PC-3 (cell line): ENCODE measurements at regions of chr20 and their contacts with region 1.

Region 1: DNA sequence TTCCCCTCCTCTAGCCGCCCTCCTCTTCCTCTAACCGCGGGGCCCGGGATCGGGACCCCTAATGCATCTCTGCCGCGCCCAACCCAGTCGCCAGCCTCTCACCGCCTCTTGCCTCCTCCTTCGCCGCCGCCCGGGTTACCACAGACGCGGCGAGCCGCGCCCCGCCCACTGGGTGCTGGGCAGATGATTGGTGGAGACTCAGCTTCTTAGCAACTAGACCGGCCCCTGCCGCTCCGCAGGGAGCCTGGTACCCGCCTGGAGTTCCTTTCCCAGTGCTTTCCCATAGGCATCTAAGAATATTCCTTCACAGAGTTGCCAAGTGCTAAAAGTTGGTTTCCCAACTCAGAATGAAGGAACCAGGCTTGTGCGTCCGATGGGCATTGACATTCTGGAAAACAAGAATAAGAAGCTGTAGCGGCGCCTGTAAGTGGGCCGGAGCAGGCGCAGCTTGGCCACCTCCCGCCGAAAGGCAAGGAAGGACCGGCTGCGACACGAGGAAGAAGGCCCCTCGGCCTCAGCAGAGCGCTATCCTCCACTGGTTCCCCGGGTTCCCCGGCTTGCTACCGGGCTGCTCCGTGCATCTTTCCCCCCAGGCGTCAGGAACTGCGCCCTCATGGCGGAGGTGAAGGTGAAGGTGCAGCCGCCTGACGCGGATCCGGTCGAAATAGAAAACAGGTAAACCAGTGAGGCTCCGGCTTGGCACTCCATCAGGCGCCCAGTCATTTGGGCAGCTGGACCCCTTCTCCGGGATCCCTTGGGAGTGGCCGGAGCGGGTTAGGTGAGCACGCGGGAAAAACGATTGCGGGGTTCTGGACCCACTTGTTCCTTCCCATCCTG is at the starts of genes DZANK1 and POLR3F:
- DNase-seq: peak; percentile 98
- ATAC-seq: peak; percentile 99
- H3K4me3 ChIP-seq: peak within 1 kb of the TSS; percentile 90
- H3K27ac ChIP-seq: peak within 1 kb of the TSS; percentile 86
- H3K4me1 ChIP-seq: peaks cover 16% of the 10 kb centered on the region
- H3K27me3 ChIP-seq: no peaks in the 10 kb centered on the region
- CTCF ChIP-seq: no peak
- total RNA-seq, gene DZANK1: 2.6 and 3.2 TPM in 2 replicates
- total RNA-seq, gene POLR3F: 28.2 and 31.8 TPM in 2 replicates

Region 2: DNA sequence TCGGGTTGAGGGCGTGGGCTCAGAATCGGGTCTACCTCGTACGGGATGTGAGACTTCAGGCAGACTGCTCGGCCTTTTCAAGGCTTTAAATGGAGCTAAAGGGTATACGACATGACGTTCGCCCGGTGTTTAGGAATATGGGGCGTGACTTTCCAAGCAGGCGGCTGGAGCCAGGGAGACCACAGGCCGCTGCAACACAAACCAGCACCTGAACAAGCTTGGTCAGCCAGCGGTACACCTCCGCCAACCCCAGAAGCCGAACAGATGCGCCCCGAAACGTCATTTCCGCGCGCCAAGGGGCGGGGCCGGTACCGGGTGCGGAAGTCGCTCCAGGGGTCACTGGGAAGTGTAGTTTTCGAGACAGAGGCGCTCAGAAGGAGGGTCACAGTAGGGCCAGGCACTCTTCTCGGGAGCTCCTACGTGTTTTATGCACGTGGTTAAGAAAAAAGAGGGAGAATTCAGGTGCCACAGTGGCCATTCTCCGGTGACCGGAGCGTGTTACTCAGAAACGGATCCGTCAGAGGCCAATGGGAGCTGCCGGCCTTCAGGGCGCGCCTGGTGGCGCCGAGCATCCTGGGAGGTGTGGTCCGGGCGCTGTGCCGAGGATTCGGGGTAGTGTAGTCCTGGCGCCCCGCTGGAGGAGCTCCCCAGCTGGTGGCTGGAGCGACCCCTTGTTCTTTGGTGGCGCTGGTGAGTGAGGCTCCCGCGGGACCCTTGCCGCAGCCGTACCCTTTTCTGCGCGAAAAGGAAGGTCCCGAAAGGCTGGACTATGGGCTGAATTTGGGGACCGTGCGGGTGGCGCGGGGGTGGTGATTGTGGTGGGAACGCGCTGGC is 179.0 kb before region 1 on chr20 and contains the start of gene ZNF133:
- CTCF ChIA-PET with region 1: no interaction called
- POLR2A ChIA-PET with region 1: no interaction called
- intact Hi-C with region 1: loop called (anchors 1 kb)
- DNase-seq: peak; percentile 98
- ATAC-seq: peak; percentile 97
- H3K4me3 ChIP-seq: peak within 1 kb of the TSS; percentile 98
- H3K27ac ChIP-seq: peak within 1 kb of the TSS; percentile 76
- H3K4me1 ChIP-seq: peaks cover 22% of the 10 kb centered on the region
- H3K27me3 ChIP-seq: no peaks in the 10 kb centered on the region
- CTCF ChIP-seq: peak; percentile 27; the same call in 1 of the 2 replicates
- total RNA-seq, gene ZNF133: 16.3 and 17.1 TPM in 2 replicates

Region 3: GRCh38 chr20:18543932-18544331 is 76.8 kb after region 1 on chr20:
- CTCF ChIA-PET with region 1: no interaction called
- POLR2A ChIA-PET with region 1: no interaction called
- intact Hi-C with region 1: loop called (anchors 5 kb)
- DNase-seq: peak; percentile 53
- ATAC-seq: no peak; the same call in 1 of the 2 replicates
- H3K4me3 ChIP-seq: no peak overlapping the region
- H3K27ac ChIP-seq: peak overlapping the region; percentile 82
- H3K4me1 ChIP-seq: peaks cover 46% of the 10 kb centered on the region
- H3K27me3 ChIP-seq: no peaks in the 10 kb centered on the region
- CTCF ChIP-seq: no peak

Region 4: DNA sequence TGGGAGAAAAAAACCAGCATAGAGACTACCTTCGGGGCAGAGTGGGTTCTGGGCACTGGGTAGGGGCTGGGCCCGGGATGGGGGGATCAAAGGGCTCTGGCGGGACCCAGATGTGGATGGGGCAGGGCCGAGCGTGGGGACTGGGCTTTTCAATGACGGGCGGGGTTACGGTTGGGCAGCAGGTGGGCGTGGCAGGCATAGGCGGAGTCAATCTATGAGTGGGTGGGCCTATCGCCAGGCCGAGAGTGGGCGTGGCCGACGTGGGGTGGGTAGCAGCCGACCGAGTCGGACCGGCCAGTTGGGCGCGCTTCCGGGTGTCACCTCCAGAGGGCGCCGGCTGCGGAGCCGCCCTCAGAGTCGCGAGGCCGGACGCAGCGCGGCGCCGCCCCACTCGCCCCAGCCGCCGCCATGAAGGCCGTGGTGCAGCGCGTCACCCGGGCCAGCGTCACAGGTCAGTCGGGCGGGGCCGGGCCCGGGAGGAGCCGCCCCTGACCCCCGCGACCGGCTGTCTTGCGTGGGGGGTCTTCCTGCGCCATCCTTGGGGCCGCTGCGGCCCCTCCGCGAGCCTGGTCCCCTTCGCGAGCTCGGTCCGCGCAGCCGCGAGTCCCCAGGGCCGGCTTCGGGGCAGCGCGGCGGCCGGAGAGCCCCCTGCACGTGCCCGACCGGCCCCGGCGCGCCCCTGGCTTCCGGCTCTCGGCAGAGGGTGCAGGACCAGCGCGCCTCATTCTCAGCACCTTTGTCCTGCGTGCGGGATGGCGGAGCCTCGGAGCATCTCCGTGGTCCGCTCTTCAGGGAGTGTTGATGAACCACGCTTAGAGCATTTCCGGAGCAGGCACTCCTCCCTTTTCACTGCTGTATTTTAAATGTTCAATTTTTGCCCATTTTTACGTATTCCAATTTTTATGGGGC is 120.8 kb after region 1 on chr20 and contains the start of gene DTD1:
- CTCF ChIA-PET with region 1: no interaction called
- POLR2A ChIA-PET with region 1: no interaction called
- intact Hi-C with region 1: loop called (anchors 5 kb)
- DNase-seq: peak; percentile 96
- ATAC-seq: peak; percentile 90
- H3K4me3 ChIP-seq: peak within 1 kb of the TSS; percentile 75
- H3K27ac ChIP-seq: peak within 1 kb of the TSS; percentile 61
- H3K4me1 ChIP-seq: peaks cover 14% of the 10 kb centered on the region; the same call in 1 of the 2 replicates
- H3K27me3 ChIP-seq: no peaks in the 10 kb centered on the region
- CTCF ChIP-seq: peak; percentile 73
- total RNA-seq, gene DTD1: 101 and 124 TPM in 2 replicates